Naive thymus-derived CD4-positive, alpha-beta T cell (primary cell): ENCODE measurements at regions of chr3 and their contacts with region 1.

Region 1: DNA sequence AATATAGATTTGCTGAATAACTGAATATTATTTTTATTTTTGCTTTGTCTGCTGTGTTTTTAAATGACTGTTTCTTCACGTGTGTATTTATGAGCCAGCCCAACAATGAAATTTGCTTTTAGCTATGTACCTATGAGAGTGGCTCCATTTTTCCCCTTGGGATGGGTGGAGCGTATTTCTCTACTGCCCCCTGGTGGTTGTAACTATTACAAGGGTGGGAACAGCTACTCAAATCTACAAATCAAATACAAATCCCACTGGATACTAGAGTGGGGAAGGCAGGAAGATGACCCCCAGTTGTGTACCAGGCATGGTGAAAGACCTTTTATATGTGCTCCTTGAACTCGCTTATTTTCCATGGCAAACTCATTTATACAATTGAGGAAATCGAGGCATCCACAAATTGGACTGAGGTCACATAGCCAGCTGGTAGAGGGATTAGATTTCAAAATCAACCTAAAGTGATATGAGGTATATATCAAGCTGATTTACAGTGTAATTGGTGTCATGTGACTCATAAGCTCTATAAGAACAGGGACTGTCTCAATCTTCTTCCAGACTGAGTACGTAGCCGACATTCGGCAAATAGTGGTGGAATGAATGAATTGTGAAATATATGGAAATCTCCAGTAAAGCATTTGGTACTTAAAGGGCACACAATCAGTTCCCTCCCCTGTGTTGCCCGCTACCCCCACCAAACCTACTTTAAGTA is 69.5 kb upstream of the VEPH1 start:
- DNase-seq: peak in 2 of 9 donors; percentile 5 to 9
- ATAC-seq: no peak
- H3K4me3 ChIP-seq: no peak overlapping the region
- H3K4me3 Mint-ChIP-seq: no peak overlapping the region
- H3K27ac ChIP-seq: no peak overlapping the region
- H3K27ac Mint-ChIP-seq: no peak overlapping the region
- H3K4me1 ChIP-seq: no peaks in the 10 kb centered on the region
- H3K4me1 Mint-ChIP-seq: peaks cover 0 to 4% (median 0%) of the 10 kb centered on the region in 7 donors
- H3K27me3 ChIP-seq: no peaks in the 10 kb centered on the region
- H3K27me3 Mint-ChIP-seq: peaks cover 9 to 28% (median 14%) of the 10 kb centered on the region in 5 donors

Region 2: DNA sequence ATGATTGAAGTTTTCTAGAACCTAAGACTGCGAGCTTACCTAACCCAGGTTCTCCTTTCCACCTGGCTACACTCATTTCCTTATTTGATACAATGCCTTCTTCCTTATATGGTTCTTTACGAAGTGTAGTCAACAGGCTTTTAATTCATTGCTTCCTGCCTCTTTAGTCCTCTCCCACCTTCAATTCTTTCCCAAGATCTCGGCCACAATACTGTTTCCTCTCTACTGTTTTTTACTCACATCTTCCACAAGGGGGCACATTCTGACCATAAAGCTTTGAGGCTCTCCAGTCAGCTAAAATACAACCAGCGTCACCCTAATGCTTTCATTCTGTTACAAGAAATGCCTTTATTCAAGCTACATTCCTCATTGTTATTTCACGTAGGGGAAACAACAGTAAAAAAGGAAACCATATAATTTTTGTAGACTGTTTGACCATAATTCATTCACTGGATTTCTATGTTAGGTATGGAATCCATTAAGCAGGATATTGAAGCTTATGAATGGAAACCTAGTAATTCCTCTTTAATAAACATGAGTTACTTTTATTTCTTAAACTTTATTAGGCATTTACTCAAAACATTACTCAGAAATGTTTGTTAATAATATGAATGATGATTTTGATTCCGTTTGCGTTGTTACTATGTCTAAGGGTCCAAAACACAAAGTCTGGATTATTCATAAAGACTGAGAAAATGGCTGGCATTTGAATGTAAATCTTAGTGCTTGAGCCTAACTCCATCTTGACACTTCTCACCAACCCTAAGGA is 40.0 kb before region 1 on chr3:
- CTCF ChIA-PET with region 1: no interaction called
- POLR2A ChIA-PET with region 1: no interaction called
- intact Hi-C with region 1: loop called (anchors 1 to 2 kb)
- DNase-seq: peak in 3 of 9 donors; percentile 4 to 5 (median 5)
- ATAC-seq: peak; percentile 59
- H3K4me3 ChIP-seq: no peak overlapping the region
- H3K4me3 Mint-ChIP-seq: no peak overlapping the region
- H3K27ac ChIP-seq: no peak overlapping the region
- H3K27ac Mint-ChIP-seq: no peak overlapping the region
- H3K4me1 ChIP-seq: no peaks in the 10 kb centered on the region
- H3K4me1 Mint-ChIP-seq: no peaks in the 10 kb centered on the region
- H3K27me3 ChIP-seq: no peaks in the 10 kb centered on the region
- H3K27me3 Mint-ChIP-seq: peaks cover 0 to 3% (median under 1%) of the 10 kb centered on the region in 5 donors